ENCODE measurements at regions of chr17 and their contacts with region 1.

Region 1: DNA sequence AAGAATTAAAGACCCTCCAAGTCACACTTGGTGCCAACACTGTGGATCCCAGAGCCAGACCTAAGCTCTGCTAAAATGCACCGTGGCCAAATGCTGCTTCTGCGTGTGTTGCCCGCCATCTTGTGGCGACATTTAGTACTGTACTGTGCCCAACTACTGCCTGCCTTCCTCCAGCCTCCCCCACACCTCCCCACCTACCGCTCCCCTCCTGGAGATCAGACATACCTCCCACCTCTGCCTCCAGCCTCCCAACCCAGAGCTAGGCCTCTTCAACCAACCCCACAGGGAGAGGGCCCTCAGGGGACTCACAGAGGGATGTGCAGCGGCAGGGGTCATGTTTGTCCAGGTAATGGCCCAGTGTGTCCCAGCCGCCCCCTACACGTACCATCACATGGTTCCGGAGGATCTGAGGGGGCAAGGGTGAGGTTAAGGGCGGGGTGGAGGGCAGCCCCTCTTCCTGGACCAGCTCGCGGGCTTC is 5.5 kb downstream of the GAS2L2 start:
- DNase-seq: peak; percentile 30
- ATAC-seq: peak; percentile 88
- H3K4me3 ChIP-seq: no peak overlapping the region
- H3K27ac ChIP-seq: no peak overlapping the region
- H3K4me1 ChIP-seq: peaks cover 13% of the 10 kb centered on the region
- H3K27me3 ChIP-seq: peaks cover 4% of the 10 kb centered on the region
- CTCF ChIP-seq: peak; percentile 92

Region 2: GRCh38 chr17:35555695-35556094 is 191.9 kb before region 1 on chr17:
- CTCF ChIA-PET with region 1: interaction called, 6 read pairs
- POLR2A ChIA-PET with region 1: no interaction called
- in situ Hi-C with region 1: no loop called
- intact Hi-C with region 1: loop called (anchors 5 kb)
- DNase-seq: no peak
- ATAC-seq: 0 out of 2 replicates have a peak, but pooled peaks have one; percentile 61
- H3K4me3 ChIP-seq: no peak overlapping the region
- H3K27ac ChIP-seq: no peak overlapping the region
- H3K4me1 ChIP-seq: no peaks in the 10 kb centered on the region
- H3K27me3 ChIP-seq: peaks cover 4% of the 10 kb centered on the region; the same call in 1 of the 2 replicates
- CTCF ChIP-seq: peak; percentile 69

Region 3: GRCh38 chr17:35612924-35613521 is 134.6 kb before region 1 on chr17:
- CTCF ChIA-PET with region 1: interaction called, 3 read pairs
- POLR2A ChIA-PET with region 1: no interaction called
- in situ Hi-C with region 1: no loop called
- intact Hi-C with region 1: loop called (anchors 5 kb)
- DNase-seq: no peak
- ATAC-seq: peak; percentile 78
- H3K4me3 ChIP-seq: no peak overlapping the region
- H3K27ac ChIP-seq: no peak overlapping the region
- H3K4me1 ChIP-seq: 0 out of 2 replicates have a peak, but pooled peaks cover under 1% of the 10 kb centered on the region
- H3K27me3 ChIP-seq: no peaks in the 10 kb centered on the region
- CTCF ChIP-seq: peak; percentile 77; the same call in 1 of the 2 replicates

Region 4: DNA sequence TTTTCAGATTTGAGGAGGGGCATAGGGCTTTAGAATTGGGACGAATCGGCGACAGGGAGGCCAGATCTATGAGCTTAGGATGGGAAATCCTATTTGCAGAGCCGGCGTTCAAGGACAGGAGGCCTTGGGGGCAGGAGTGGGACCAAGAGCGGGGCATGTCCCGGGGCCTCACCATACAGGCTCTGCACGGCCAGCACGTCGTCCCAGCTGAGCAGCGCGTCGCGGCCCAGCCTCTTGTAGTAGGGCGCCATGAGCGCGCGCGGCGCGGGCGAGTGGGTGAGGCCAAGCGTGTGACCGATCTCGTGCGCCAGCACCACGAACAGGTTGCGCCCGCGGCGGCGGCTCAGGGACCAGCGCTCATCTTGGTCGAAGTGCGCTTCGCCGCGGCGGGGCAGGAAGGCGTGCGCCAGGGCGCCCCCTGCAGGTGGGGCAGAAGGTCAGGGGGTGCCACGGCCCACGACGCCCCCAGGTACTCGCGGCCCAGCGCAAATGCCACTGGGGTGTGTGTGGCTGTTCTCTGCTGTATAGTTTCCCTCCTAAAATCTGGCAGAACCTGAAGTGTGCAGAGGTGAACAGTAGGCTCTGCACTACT is 22.4 kb after region 1 on chr17:
- CTCF ChIA-PET with region 1: no interaction called
- POLR2A ChIA-PET with region 1: no interaction called
- in situ Hi-C with region 1: no loop called
- intact Hi-C with region 1: no loop called
- DNase-seq: no peak
- ATAC-seq: no peak
- H3K4me3 ChIP-seq: no peak overlapping the region
- H3K27ac ChIP-seq: no peak overlapping the region
- H3K4me1 ChIP-seq: peaks cover 8% of the 10 kb centered on the region; the same call in 1 of the 2 replicates
- H3K27me3 ChIP-seq: peaks cover 3% of the 10 kb centered on the region; the same call in 1 of the 2 replicates
- CTCF ChIP-seq: peak; percentile 77; the same call in 1 of the 2 replicates

Region 5: DNA sequence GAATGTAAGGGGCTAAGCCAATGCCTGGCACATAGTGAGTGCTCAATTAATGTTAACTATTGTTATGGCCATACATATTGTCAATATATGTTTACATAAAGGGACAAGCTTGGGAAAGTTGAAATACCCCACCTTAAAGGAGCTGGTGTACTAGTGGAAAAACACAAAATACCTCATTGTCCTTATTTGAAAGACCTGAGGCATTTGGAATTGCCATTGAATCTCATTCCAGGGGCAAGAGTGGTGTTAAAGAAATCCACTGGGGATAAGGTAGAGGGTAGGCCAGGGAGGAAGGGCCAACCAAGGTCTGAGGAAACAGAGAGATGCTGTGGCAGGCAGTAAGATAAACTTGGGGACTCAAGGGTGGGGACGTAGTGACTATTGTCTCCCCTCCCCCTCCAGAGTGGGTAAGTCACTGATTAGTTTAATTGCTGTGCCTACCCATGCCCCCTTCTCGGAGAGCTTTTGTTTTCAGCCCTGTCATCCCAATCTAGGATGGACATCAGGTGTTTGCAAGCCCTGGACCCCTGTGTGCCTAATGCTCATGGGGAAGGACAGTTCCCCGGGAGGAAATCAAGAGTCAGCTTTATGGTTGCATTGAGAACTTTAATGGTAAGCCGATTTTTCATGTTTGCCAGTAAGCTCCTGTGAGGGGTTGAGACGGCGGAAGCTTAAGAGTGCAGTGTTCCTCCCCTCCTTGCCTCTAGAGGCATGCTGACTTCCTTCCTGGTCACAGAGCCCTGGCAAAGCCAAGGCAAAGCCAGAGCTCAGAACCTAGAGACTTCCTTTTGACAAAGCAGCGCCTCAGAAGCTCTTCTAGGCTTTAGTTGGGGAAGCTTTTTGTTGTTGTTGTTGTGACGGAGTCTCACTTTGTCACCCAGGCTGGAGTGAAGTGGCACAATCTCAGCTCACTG is 123.6 kb after region 1 on chr17:
- CTCF ChIA-PET with region 1: no interaction called
- POLR2A ChIA-PET with region 1: no interaction called
- in situ Hi-C with region 1: no loop called
- intact Hi-C with region 1: no loop called
- DNase-seq: no peak
- ATAC-seq: no peak
- H3K4me3 ChIP-seq: no peak overlapping the region
- H3K27ac ChIP-seq: no peak overlapping the region
- H3K4me1 ChIP-seq: no peaks in the 10 kb centered on the region
- H3K27me3 ChIP-seq: no peaks in the 10 kb centered on the region
- CTCF ChIP-seq: no peak